ENCODE measurements at regions of chr20 and their contacts with region 1.

Region 1: DNA sequence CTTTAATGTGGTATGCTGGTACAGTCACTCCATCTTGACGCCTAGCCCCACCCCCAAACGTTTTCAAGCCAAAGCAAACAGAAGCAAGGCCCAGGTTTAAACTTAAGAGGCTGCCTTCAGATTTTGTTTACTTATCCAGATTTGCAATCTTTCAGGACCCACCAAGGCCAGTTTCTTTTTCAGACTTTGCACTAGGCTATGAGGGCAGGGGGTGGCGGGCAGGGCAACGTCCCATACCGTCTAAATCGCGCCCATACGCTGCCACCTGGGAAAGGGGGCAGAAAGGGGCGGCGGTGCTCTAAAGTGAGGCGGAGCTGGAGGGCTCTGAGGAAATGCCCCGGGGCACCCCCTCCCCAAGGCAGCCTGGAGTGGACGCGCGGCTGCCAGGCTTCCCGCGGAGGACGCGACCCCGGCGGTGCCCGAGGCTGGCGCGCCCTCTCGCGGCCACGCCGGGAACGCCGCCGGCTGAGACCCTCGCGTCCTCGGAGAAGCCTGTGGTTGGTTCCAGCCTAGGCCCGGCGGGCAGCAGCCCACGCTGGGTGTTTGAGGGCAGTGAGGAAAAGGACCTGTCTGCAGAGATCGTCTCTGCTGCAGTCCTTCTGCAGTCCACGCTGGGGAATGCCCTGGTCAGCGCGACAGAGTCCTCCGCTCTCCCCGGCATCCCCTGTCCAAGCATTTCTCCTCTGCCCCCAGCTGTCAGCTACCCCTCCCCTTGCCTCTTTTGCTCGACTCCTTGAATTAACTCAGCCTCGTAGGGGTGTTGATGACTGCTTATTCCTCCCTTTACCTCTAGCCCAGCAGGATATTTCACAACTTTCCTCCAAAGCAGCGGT is 129.2 kb upstream of the PRND start:
- DNase-seq: peak; percentile 58
- ATAC-seq: peak; percentile 93
- H3K4me3 Mint-ChIP-seq: peak overlapping the region; percentile 46
- H3K27ac Mint-ChIP-seq: no peak overlapping the region
- H3K4me1 Mint-ChIP-seq: peaks cover 8% of the 10 kb centered on the region
- H3K27me3 Mint-ChIP-seq: peaks cover 7% of the 10 kb centered on the region
- CTCF ChIP-seq: peak; percentile 98

Region 2: GRCh38 chr20:4227085-4227821 is 365.3 kb before region 1 on chr20:
- CTCF ChIA-PET with region 1: no interaction called
- POLR2A ChIA-PET with region 1: no interaction called
- intact Hi-C with region 1: loop called (anchors 5 kb)
- DNase-seq: peak; percentile 17
- ATAC-seq: no peak
- H3K4me3 Mint-ChIP-seq: no peak overlapping the region
- H3K27ac Mint-ChIP-seq: no peak overlapping the region
- H3K4me1 Mint-ChIP-seq: no peaks in the 10 kb centered on the region
- H3K27me3 Mint-ChIP-seq: peaks cover 20% of the 10 kb centered on the region
- CTCF ChIP-seq: no peak

Region 3: DNA sequence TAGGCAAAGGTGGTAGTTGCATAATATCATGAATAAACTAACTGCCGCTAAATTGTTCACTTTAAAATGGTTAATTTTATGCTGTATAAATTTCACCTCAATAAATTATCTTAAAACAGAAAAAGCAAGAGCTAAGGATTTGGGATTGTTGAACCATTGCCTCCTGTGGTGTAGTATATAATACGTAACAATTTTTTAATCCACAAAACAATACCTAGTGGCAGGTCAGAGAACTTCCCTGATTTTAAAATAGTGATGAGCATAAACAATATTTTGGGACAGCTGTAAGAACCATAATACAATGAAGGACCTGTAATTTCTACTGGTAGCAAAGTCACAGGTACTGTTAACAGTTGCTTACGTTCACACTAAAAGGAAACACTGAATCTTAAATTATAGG is 68.2 kb before region 1 on chr20:
- CTCF ChIA-PET with region 1: no interaction called
- POLR2A ChIA-PET with region 1: no interaction called
- intact Hi-C with region 1: no loop called
- DNase-seq: no peak
- ATAC-seq: no peak
- H3K4me3 Mint-ChIP-seq: no peak overlapping the region
- H3K27ac Mint-ChIP-seq: no peak overlapping the region
- H3K4me1 Mint-ChIP-seq: no peaks in the 10 kb centered on the region
- H3K27me3 Mint-ChIP-seq: peaks cover 6% of the 10 kb centered on the region
- CTCF ChIP-seq: no peak

Region 4: DNA sequence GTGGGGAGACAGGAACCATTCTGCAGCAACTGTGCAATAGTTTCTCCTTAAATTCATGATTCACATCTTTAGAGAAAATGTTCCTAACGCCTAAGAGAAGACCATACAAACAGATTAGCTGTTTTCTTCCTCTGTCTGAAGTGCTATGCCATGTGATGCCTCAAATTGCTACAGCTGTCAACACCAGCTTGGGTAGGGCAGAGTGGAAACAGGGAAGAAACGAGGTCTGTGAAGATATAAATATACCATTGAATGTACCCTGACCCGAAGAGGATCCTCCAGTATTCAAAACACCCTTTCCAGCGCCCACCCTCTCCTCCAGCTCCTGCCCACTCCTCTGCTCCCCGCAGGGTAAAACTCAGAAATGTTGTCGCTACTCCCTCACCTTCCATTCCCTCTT is 88.9 kb after region 1 on chr20:
- CTCF ChIA-PET with region 1: no interaction called
- POLR2A ChIA-PET with region 1: no interaction called
- intact Hi-C with region 1: no loop called
- DNase-seq: no peak
- ATAC-seq: no peak
- H3K4me3 Mint-ChIP-seq: no peak overlapping the region
- H3K27ac Mint-ChIP-seq: no peak overlapping the region
- H3K4me1 Mint-ChIP-seq: peaks cover 29% of the 10 kb centered on the region
- H3K27me3 Mint-ChIP-seq: no peaks in the 10 kb centered on the region
- CTCF ChIP-seq: no peak